Sigmoid colon (tissue), 7 donors: ENCODE measurements at regions of chr2 and their contacts with region 1.

Region 1: DNA sequence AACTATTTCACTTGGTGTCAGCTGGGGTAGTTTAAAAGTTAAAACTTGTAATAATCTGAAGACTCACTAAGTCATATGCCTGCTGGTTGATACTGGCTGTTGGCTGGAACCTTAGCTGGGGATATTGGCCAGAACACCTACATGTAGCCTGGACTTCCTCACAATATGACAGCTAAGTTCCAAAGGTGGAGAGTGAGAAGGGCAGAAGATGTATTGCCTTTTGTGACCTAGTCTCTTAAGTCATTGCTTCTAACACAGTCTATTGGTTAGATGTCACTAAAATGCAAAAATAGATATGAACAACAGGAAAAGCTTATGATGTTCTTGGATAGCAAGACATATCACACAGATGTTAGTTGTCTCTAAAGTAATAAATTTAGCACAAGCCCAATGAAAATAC is 113.2 kb upstream of the CHAC2 start:
- DNase-seq: peak; percentile 73
- H3K4me3 ChIP-seq: no peak overlapping the region
- H3K27ac ChIP-seq: peak overlapping the region in 2 of 4 donors; percentile 57 to 68
- H3K4me1 ChIP-seq: peaks cover 0 to 30% (median 21%) of the 10 kb centered on the region in 4 donors
- H3K27me3 ChIP-seq: no peaks in the 10 kb centered on the region
- CTCF ChIP-seq: no peak
- EP300 ChIP-seq: peak; percentile 74 to 95 (median 84)
- POLR2A ChIP-seq: no peak

Region 2: GRCh38 chr2:53486185-53486584 is 168.2 kb before region 1 on chr2:
- intact Hi-C with region 1: loop called (anchors 5 kb)
- DNase-seq: no peak
- H3K4me3 ChIP-seq: no peak overlapping the region
- H3K27ac ChIP-seq: no peak overlapping the region
- H3K4me1 ChIP-seq: peaks cover 0 to 12% (median 9%) of the 10 kb centered on the region in 4 donors
- H3K27me3 ChIP-seq: no peaks in the 10 kb centered on the region
- CTCF ChIP-seq: no peak
- EP300 ChIP-seq: no peak
- POLR2A ChIP-seq: no peak

Region 3: GRCh38 chr2:53568469-53568868 is 85.9 kb before region 1 on chr2:
- intact Hi-C with region 1: loop called (anchors 10 kb)
- DNase-seq: no peak
- H3K4me3 ChIP-seq: no peak overlapping the region
- H3K27ac ChIP-seq: no peak overlapping the region
- H3K4me1 ChIP-seq: peaks cover 0 to 7% (median 5%) of the 10 kb centered on the region in 4 donors
- H3K27me3 ChIP-seq: no peaks in the 10 kb centered on the region
- CTCF ChIP-seq: no peak
- EP300 ChIP-seq: no peak
- POLR2A ChIP-seq: no peak